ENCODE measurements at regions of chr9 and their contacts with region 1.

Region 1: GRCh38 chr9:89602978-89603766 is 1.6 kb upstream of the GADD45G start:
- DNase-seq: peak; percentile 85 to 92
- H3K4me3 ChIP-seq: peak overlapping the region; percentile 80 to 88
- H3K27ac ChIP-seq: peak overlapping the region; percentile 95 to 96
- H3K4me1 ChIP-seq: peaks cover 0 to 32% (median 26%) of the 10 kb centered on the region in 4 donors
- H3K27me3 ChIP-seq: no peaks in the 10 kb centered on the region
- CTCF ChIP-seq: peak; percentile 84 to 88

Region 2: GRCh38 chr9:89684901-89685636 is 81.9 kb after region 1 on chr9:
- intact Hi-C with region 1: loop called (anchors 5 kb)
- DNase-seq: peak; percentile 78 to 96
- H3K4me3 ChIP-seq: no peak overlapping the region
- H3K27ac ChIP-seq: peak overlapping the region; percentile 82 to 86
- H3K4me1 ChIP-seq: peaks cover 0 to 35% (median 23%) of the 10 kb centered on the region in 4 donors
- H3K27me3 ChIP-seq: no peaks in the 10 kb centered on the region
- CTCF ChIP-seq: peak; percentile 20 to 53

Region 3: GRCh38 chr9:89878687-89879086 is 275.5 kb after region 1 on chr9:
- intact Hi-C with region 1: loop called (anchors 5 kb)
- DNase-seq: peak; percentile 66 to 91
- H3K4me3 ChIP-seq: no peak overlapping the region
- H3K27ac ChIP-seq: peak overlapping the region; percentile 44 to 68
- H3K4me1 ChIP-seq: peaks cover 0 to 56% (median 48%) of the 10 kb centered on the region in 4 donors
- H3K27me3 ChIP-seq: no peaks in the 10 kb centered on the region
- CTCF ChIP-seq: no peak

Region 4: DNA sequence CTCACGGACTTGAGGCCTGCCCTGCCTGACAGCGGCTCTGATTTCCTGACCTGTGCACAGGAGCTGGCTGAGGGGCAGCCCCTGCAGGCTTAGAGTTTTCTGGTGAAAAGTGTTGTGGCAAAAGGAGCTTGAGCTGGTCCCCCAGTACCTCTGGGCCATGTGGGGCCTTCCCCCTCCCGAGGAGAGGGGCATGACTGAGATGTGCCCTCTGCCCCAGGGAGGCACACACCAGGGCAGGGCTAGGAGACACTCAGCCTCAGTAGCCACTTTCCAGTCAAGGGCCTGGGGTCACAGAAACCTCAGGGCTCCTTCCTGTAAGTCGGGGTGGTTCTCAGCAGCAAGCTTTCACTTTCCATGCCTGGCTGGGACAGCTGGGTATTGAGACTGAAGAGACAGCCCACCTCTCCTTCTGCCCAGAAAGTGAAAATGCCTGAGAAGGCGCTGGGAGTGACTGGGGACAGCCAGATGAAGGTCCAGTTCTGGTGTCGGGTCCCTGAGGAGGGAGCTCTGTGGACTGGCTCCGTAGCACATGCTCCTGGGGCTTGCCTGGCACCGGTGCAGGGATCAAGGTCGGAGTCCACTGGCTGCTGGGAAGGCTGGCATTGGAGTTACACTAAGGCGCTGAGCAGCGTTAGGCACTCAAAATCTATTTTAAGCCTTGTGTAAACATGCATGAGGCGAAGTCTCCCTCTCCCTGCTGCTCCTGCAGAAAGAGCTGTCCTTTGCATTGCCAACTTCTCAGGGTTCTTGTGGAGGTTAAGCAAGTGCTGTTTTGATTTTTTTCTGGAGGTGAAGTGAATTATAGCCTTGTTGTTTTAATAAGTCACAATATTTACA is 396.6 kb after region 1 on chr9:
- intact Hi-C with region 1: loop called (anchors 5 kb)
- DNase-seq: peak; percentile 75 to 96
- H3K4me3 ChIP-seq: peak overlapping the region; percentile 15 to 43
- H3K27ac ChIP-seq: peak overlapping the region; percentile 78 to 83
- H3K4me1 ChIP-seq: peaks cover 3 to 65% (median 50%) of the 10 kb centered on the region in 4 donors
- H3K27me3 ChIP-seq: no peaks in the 10 kb centered on the region
- CTCF ChIP-seq: no peak

Region 5: GRCh38 chr9:90102292-90102901 is 499.2 kb after region 1 on chr9:
- intact Hi-C with region 1: loop called (anchors 2 kb)
- DNase-seq: peak; percentile 81 to 88
- H3K4me3 ChIP-seq: no peak overlapping the region
- H3K27ac ChIP-seq: no peak overlapping the region
- H3K4me1 ChIP-seq: peaks cover 0 to 4% (median 0%) of the 10 kb centered on the region in 4 donors
- H3K27me3 ChIP-seq: no peaks in the 10 kb centered on the region
- CTCF ChIP-seq: peak; percentile 77 to 91

Region 6: GRCh38 chr9:91422758-91423711 is 1819.9 kb after region 1 on chr9:
- intact Hi-C with region 1: loop called (anchors 10 kb)
- DNase-seq: peak; percentile 85 to 93
- H3K4me3 ChIP-seq: peak overlapping the region; percentile 73 to 77
- H3K27ac ChIP-seq: peak overlapping the region; percentile 81 to 89
- H3K4me1 ChIP-seq: peaks cover 0 to 38% (median 21%) of the 10 kb centered on the region in 4 donors
- H3K27me3 ChIP-seq: no peaks in the 10 kb centered on the region
- CTCF ChIP-seq: peak in 1 of 2 experiments; percentile 20